ENCODE measurements at regions of chr12 and their contacts with region 1.

Region 1: GRCh38 chr12:13165617-13166041 is 30.9 kb upstream of the EMP1 start:
- DNase-seq: peak; percentile 93
- H3K4me3 Mint-ChIP-seq: no peak overlapping the region
- H3K27ac Mint-ChIP-seq: peak overlapping the region; percentile 31
- H3K4me1 Mint-ChIP-seq: peaks cover 23% of the 10 kb centered on the region
- H3K27me3 Mint-ChIP-seq: no peaks in the 10 kb centered on the region

Region 2: DNA sequence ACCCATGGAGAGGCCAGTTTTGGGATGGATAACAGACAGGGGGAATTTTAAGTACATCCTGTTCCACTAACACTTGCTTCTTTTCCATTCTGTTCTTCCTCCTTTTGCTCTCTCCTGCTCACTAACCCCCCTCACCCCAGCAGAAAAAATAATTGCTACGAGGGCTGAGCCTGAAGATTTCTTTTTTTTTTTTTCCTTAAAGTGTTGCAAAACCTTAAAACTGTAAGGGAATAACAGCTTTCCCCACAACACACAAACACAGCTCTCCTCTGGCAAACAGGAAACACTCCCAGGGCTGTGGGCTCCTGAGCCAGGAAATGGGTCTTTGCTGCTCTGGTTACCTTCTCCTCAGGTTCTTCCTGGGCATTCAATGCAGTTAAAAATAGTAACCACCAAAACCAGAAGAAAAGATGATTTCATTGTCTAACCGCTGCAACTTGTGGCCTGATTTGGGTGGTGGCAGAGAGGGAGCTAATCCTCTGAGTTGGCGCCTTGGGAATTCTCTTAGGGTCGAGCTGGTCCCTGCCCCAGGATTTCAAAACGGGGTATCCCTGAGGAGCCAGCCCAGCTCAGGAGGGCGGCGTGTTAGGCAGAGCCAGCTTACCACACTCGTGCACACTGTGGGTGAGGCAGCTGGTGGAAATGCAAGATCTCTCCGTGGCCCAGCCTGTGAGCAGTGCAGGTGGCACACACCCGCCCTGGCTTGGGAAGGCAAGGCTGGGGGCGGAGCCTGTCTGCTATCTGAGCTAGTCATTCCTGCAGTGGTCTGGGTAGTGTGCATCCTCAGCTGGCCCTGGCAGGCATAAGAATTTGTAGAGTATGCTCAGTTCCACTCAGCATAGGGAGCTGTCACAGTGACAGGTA is 13.8 kb after region 1 on chr12:
- CTCF ChIA-PET with region 1: interaction called, 3 read pairs
- intact Hi-C with region 1: loop called (anchors 2 kb)
- DNase-seq: peak; percentile 74
- H3K4me3 Mint-ChIP-seq: peak overlapping the region; percentile 37
- H3K27ac Mint-ChIP-seq: no peak overlapping the region
- H3K4me1 Mint-ChIP-seq: peaks cover 15% of the 10 kb centered on the region
- H3K27me3 Mint-ChIP-seq: no peaks in the 10 kb centered on the region

Measured in activated naive CD4-positive, alpha-beta T cell treated with anti-CD3 and anti-CD28 coated beads for 36 hours (primary cell).